CD4-positive, alpha-beta T cell (primary cell): ENCODE measurements at regions of chr2 and their contacts with region 1.

Region 1: GRCh38 chr2:100610381-100610831 is 47.6 kb downstream of the PDCL3 start:
- DNase-seq: peak; percentile 72 to 87 (median 79)
- ATAC-seq: peak; percentile 95
- H3K4me3 ChIP-seq: no peak overlapping the region
- H3K4me3 Mint-ChIP-seq: no peak overlapping the region
- H3K27ac ChIP-seq: no peak overlapping the region
- H3K27ac Mint-ChIP-seq: no peak overlapping the region
- H3K4me1 ChIP-seq: peaks cover 10% of the 10 kb centered on the region
- H3K4me1 Mint-ChIP-seq: peaks cover 12% of the 10 kb centered on the region
- H3K27me3 ChIP-seq: no peaks in the 10 kb centered on the region
- H3K27me3 Mint-ChIP-seq: peaks cover 6% of the 10 kb centered on the region
- CTCF ChIP-seq: peak; percentile 89

Region 2: DNA sequence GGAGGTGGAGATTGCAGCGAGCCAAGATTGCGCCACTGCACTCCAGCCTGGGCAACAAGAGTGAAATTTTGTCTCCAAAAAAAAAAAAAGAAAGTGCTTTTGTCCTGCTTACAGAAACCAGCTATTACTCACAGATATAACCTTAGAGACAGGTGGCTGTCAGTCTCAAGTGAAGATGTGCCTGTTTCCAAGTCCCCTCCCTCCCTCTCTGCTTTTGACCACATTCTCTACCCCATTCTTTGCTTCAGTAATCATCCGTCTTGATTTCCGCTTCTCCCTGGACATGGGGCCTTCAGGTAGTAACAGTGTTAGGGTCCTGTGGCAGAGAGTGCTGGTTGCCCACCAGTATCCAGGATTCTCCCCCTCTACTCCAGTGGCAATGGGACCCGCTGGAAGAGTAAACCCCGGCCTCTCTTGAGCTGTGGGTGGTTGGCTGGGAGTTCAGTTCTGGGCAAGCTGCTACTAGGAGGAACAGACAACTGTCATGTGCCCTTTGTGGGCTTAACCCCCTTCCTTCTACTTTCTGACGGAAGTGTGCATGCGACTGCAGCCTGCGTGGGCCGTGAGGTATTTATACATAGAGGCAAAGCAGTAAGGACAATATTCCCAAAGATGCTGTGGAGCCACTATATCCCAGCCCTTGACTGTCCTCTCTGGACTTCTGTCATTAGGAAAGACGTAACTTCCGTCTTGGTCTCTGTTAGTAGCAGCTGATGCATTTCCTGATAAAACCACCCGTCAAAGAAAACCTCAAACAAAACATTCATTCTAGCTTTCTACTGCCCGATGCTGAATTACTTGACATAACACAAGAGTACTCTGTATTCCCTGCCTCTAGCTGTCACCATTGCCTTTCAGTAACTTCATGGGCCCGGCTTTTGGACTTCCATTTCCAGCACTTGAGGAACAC is 29.8 kb before region 1 on chr2:
- CTCF ChIA-PET with region 1: interaction called, 24 read pairs
- POLR2A ChIA-PET with region 1: interaction called, 3 read pairs
- intact Hi-C with region 1: no loop called
- DNase-seq: peak; percentile 26 to 84 (median 56)
- ATAC-seq: peak; percentile 80
- H3K4me3 ChIP-seq: peak overlapping the region; percentile 21
- H3K4me3 Mint-ChIP-seq: peak overlapping the region; percentile 2
- H3K27ac ChIP-seq: peak overlapping the region; percentile 82 to 83
- H3K27ac Mint-ChIP-seq: peak overlapping the region; percentile 90
- H3K4me1 ChIP-seq: peaks cover 40% of the 10 kb centered on the region
- H3K4me1 Mint-ChIP-seq: peaks cover 45% of the 10 kb centered on the region
- H3K27me3 ChIP-seq: no peaks in the 10 kb centered on the region
- H3K27me3 Mint-ChIP-seq: no peaks in the 10 kb centered on the region
- CTCF ChIP-seq: no peak

Region 3: GRCh38 chr2:100640431-100641124 is 30.2 kb after region 1 on chr2:
- CTCF ChIA-PET with region 1: interaction called, 19 read pairs
- POLR2A ChIA-PET with region 1: interaction called, 9 read pairs
- intact Hi-C with region 1: loop called in 1 of 2 experiments (anchors 1 kb)
- DNase-seq: peak in 2 of 14 experiments; percentile 35 to 42
- ATAC-seq: no peak
- H3K4me3 ChIP-seq: no peak overlapping the region
- H3K4me3 Mint-ChIP-seq: no peak overlapping the region
- H3K27ac ChIP-seq: no peak overlapping the region
- H3K27ac Mint-ChIP-seq: peak overlapping the region; percentile 51
- H3K4me1 ChIP-seq: peaks cover 55% of the 10 kb centered on the region
- H3K4me1 Mint-ChIP-seq: peaks cover 55% of the 10 kb centered on the region
- H3K27me3 ChIP-seq: no peaks in the 10 kb centered on the region
- H3K27me3 Mint-ChIP-seq: no peaks in the 10 kb centered on the region
- CTCF ChIP-seq: no peak

Region 4: DNA sequence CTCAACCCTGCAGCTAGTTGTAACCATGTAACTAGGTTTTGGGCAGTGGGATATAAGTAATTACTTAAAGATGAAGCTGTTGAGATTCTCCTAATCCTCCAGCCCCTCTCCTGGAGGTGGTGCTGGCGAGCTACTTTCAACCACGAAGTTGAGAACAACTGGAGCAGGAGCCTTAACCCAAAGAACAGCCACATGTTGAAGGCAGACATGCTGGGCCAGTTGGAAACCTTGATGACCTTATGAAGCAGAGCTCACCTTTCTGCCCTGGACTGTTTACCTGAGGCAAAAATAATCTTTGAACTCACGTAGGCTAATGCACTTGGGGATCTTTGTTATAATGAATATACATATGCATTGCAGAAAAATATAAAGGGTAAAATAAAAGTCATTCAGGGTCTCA is 119.9 kb after region 1 on chr2:
- CTCF ChIA-PET with region 1: interaction called, 3 read pairs
- POLR2A ChIA-PET with region 1: no interaction called
- intact Hi-C with region 1: loop called (anchors 2 to 5 kb)
- DNase-seq: peak in 12 of 14 experiments; percentile 7 to 50 (median 26)
- ATAC-seq: no peak
- H3K4me3 ChIP-seq: no peak overlapping the region
- H3K4me3 Mint-ChIP-seq: no peak overlapping the region
- H3K27ac ChIP-seq: no peak overlapping the region
- H3K27ac Mint-ChIP-seq: no peak overlapping the region
- H3K4me1 ChIP-seq: no peaks in the 10 kb centered on the region
- H3K4me1 Mint-ChIP-seq: no peaks in the 10 kb centered on the region
- H3K27me3 ChIP-seq: no peaks in the 10 kb centered on the region
- H3K27me3 Mint-ChIP-seq: peaks cover 28% of the 10 kb centered on the region
- CTCF ChIP-seq: no peak

Region 5: DNA sequence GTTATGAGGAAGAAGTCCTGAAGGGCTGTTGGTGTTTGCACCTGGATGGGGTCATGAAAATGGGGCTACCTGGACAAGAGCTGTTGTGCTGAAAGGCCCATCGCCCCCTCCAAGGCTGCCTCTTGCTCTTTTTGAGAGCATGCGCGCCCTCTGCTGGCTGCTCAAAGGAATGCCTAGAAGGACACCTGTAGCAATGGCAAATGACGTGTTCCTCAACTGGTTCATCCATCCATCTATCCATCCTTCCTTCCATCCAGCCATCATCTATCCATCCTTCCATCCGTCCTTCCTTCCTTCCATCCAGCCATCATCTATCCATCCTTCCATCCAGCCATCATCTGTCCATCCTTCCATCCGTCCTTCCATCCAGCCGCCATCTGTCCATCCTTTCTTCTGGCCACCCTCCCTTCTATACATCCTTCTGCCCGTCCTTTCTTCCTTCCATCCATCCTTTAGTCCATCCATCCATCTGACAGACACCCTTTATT is 374.5 kb after region 1 on chr2:
- CTCF ChIA-PET with region 1: interaction called, 27 read pairs
- POLR2A ChIA-PET with region 1: interaction called, 3 read pairs
- intact Hi-C with region 1: loop called (anchors 1 kb)
- DNase-seq: peak; percentile 69 to 89 (median 76)
- ATAC-seq: peak; percentile 89
- H3K4me3 ChIP-seq: no peak overlapping the region
- H3K4me3 Mint-ChIP-seq: no peak overlapping the region
- H3K27ac ChIP-seq: no peak overlapping the region
- H3K27ac Mint-ChIP-seq: no peak overlapping the region
- H3K4me1 ChIP-seq: no peaks in the 10 kb centered on the region
- H3K4me1 Mint-ChIP-seq: no peaks in the 10 kb centered on the region
- H3K27me3 ChIP-seq: no peaks in the 10 kb centered on the region
- H3K27me3 Mint-ChIP-seq: no peaks in the 10 kb centered on the region
- CTCF ChIP-seq: peak; percentile 95